ENCODE measurements at regions of chr10 and their contacts with region 1.

Region 1: GRCh38 chr10:122446668-122447423 is 7.6 kb upstream of the ARMS2 start:
- DNase-seq: peak; percentile 12
- H3K4me3 ChIP-seq: no peak overlapping the region
- H3K27ac ChIP-seq: no peak overlapping the region
- H3K4me1 ChIP-seq: peaks cover 7% of the 10 kb centered on the region
- H3K27me3 ChIP-seq: no peaks in the 10 kb centered on the region

Region 2: GRCh38 chr10:122565728-122566206 is 118.9 kb after region 1 on chr10:
- in situ Hi-C with region 1: loop called (anchors 10 kb)
- DNase-seq: peak; percentile 84
- H3K4me3 ChIP-seq: peak overlapping the region; percentile 63
- H3K27ac ChIP-seq: no peak overlapping the region
- H3K4me1 ChIP-seq: no peaks in the 10 kb centered on the region
- H3K27me3 ChIP-seq: peaks cover 13% of the 10 kb centered on the region

Measured in GM23248 (cell line).